ENCODE measurements at regions of chr3 and their contacts with region 1.

Region 1: DNA sequence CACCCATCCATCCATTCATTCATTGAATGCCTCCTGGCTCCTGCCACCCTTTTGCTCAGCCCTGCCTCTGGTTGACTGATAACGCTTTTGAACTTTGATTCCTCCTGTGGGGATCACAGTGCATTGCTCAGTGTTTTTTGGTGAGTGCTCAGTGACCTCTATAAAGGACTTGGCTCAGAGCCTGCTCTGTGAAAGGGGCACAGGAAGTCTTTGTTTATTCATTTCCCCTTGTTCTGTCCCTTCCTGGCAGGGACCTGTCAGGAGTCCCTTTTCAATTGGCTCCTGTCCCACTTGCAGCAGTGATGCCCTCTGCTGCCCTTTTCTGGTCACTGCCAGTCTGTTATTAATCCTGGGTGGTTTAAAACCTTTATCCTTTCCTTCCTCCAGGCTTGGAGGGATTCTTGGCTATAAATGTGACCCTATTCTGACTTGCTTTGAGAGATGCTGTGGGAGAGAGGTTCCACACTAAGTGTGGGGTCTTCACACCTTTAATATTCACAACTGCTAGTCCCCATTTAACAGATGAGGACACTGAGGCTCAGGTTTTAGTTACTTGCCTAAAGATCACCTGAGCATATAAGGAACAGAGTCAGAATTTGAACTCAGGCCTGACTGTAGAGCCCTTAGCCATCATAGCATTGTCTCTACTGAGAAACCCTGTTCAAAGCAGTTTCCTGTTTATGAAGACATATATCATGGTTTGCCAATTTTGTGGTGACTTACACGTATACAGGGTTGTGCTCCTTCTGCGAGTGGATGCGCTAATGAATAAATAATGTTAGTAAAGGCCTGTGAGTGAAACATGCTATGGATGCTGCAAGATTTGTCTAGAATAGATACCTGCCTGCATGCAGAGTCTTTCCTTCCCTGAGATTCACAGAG is 23.2 kb upstream of the TATDN2 start:
- DNase-seq: peak; percentile 57 to 82 (median 75)
- H3K4me3 ChIP-seq: peak overlapping the region in 1 of 59 donors; percentile 20
- H3K27ac ChIP-seq: peak overlapping the region in 49 of 59 donors; percentile 2 to 86 (median 62)
- H3K27me3 ChIP-seq: no peaks in the 10 kb centered on the region
- CTCF ChIP-seq: peak; percentile 69 to 97 (median 86)

Region 2: DNA sequence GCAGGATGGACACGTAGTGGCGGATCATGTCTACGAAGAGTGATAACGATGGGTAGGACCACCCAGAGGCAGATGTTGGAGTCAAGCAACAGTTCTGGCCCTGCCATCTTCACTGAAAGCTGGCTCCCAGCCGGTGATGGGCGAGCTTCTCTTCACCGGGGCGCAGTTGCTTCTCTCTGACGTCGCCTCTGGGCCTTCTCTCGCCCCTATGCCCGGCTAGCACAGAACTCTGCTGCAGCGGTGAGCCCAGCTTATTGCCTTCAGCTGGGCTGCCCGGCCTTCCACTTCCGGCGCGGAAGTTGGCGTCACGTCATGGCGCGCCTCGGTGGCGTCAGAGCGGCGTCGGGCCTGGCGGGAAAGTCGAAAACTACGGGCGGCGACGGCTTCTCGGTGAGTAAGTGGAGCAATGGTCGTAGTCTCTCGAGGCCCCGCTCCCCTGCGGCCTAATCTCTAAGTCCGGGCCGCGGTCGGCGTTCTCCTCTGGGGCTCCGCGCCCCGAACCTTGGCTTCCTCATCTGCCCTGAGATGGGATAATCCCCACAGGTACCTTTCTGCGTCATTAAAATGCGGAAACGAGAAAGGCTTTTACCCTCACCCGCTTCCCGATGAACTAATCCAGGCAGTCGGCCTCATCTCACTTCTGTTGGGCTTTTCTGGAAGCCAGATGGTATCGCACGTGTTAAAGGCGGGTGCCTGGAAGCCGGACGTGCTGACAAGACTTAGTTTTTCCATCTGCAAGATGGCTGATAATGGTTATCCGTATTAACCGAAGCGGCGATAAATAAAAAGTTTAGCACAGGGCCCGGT is 198.7 kb before region 1 on chr3 and contains the start of gene FANCD2:
- intact Hi-C with region 1: loop called in 1 of 2 experiments (anchors 10 kb)
- DNase-seq: peak; percentile 83 to 97 (median 88)
- H3K4me3 ChIP-seq: peak within 1 kb of the TSS; percentile 64 to 100 (median 92)
- H3K27ac ChIP-seq: peak within 1 kb of the TSS in 50 of 59 donors; percentile 6 to 92 (median 61)
- H3K27me3 ChIP-seq: no peaks in the 10 kb centered on the region
- CTCF ChIP-seq: peak in 22 of 56 donors; percentile 3 to 42 (median 18)
- total RNA-seq, gene FANCD2: 0.71 to 6.8 (median 2.9) TPM

Region 3: GRCh38 chr3:10142707-10143566 is 82.1 kb before region 1 on chr3:
- intact Hi-C with region 1: loop called in 1 of 2 experiments (anchors 5 kb)
- DNase-seq: no peak
- H3K4me3 ChIP-seq: peak overlapping the region; percentile 53 to 97 (median 88)
- H3K27ac ChIP-seq: peak overlapping the region in 14 of 59 donors; percentile 41 to 94 (median 90)
- H3K27me3 ChIP-seq: no peaks in the 10 kb centered on the region
- CTCF ChIP-seq: no peak

Region 4: GRCh38 chr3:10173926-10174435 is 51.0 kb before region 1 on chr3:
- intact Hi-C with region 1: no loop called
- DNase-seq: peak in 5 of 10 donors; percentile 56 to 67 (median 67)
- H3K4me3 ChIP-seq: peak overlapping the region in 3 of 59 donors; percentile 4 to 14 (median 6)
- H3K27ac ChIP-seq: peak overlapping the region in 58 of 59 donors; percentile 13 to 92 (median 81)
- H3K27me3 ChIP-seq: no peaks in the 10 kb centered on the region
- CTCF ChIP-seq: no peak

Region 5: DNA sequence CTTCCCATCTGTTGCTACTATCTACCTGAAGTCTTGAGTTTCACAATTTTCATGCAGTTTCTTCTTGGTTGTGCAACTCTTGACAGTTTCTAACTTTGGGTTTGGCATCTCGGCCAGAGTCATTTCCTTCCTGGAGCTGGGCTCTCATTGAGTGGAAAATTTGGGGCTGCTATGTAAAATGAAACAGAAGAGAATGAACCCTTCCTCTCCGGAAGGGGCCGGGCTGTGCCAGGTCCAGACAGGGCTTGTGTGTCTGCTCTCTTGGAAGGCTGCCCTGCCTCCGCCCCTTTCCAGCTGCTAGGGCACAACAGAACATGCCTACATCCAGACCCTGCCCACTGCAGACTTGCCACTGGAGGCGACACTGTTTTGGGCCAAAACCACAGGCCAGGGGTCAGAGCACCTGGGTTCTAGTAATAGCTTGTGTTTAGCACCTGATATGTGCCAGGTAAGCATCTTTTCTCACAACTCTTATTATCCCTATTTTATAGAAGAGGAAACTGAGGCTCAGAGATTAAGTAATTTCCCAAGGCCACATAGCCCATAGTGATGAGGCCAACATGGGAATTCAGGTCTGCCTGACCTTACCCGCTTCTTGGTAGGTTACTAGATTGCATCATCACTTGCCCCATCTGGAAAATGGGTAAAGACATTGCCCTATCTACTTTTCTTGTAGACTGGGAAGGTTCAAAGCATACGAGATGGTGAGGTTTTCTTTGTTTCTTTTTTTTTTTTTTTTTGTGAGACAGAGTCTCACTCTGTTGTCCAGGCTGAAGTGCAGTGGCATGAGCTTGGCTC is 35.3 kb before region 1 on chr3:
- intact Hi-C with region 1: loop called in 1 of 2 experiments (anchors 5 kb)
- DNase-seq: peak; percentile 37 to 98 (median 94)
- H3K4me3 ChIP-seq: peak overlapping the region in 20 of 59 donors; percentile 4 to 50 (median 20)
- H3K27ac ChIP-seq: peak overlapping the region; percentile 79 to 100 (median 98)
- H3K27me3 ChIP-seq: no peaks in the 10 kb centered on the region
- CTCF ChIP-seq: peak in 27 of 56 donors; percentile 3 to 58 (median 27)

Region 6: GRCh38 chr3:10570196-10570946 is 345.3 kb after region 1 on chr3:
- intact Hi-C with region 1: no loop called
- DNase-seq: peak in 1 of 10 donors; percentile 59
- H3K4me3 ChIP-seq: no peak overlapping the region
- H3K27ac ChIP-seq: peak overlapping the region in 1 of 59 donors; percentile 16
- H3K27me3 ChIP-seq: no peaks in the 10 kb centered on the region
- CTCF ChIP-seq: no peak